Naive thymus-derived CD4-positive, alpha-beta T cell (primary cell): ENCODE measurements at regions of chr19 and their contacts with region 1.

Region 1: DNA sequence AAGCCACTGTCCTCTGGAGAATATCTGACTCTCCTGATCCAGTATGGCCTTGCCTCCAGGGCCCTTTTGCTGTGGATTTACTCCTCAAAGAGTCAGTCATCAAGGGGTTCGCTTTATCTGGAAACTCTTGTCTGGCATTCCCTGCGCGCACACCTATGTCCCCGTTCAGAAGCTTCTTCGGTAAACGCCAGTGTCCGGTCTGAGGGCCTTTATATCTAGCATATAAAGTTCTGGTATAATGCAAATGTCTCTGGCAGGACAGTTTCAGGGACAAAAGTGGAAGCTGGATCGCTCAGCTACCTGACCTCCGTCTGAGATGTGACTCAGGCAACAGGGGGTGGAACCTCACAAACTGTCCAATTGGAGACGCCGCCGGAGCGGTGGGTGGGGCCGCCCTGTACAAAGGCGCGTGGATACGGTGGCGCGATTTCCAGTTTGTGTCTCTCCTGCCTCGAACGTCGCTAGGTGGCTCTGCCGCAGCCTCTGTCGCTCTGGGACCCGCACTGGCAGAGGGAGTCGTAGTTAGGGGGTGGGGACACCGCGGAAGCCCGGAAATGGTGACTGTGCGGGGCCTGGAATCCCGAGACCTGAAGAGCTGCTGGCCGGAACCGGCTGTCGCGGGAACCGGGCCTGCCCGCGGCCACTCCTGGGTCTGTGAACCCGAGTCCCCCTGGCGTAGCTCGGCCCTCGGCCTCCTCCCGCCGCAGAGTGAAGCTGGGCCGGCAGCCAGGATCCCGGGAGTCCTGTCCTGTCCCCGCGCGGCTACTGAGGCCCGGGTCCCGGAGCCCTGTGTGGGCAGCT is 10.6 kb upstream of the ZNF709 start:
- DNase-seq: peak; percentile 76 to 94 (median 91)
- ATAC-seq: peak; percentile 100
- H3K4me3 ChIP-seq: peak overlapping the region; percentile 80
- H3K4me3 Mint-ChIP-seq: peak overlapping the region; percentile 84 to 95 (median 91)
- H3K27ac ChIP-seq: peak overlapping the region; percentile 72
- H3K27ac Mint-ChIP-seq: peak overlapping the region; percentile 84 to 98 (median 91)
- H3K4me1 ChIP-seq: peaks cover 9 to 11% of the 10 kb centered on the region in 2 donors
- H3K4me1 Mint-ChIP-seq: peaks cover 0 to 16% (median 13%) of the 10 kb centered on the region in 7 donors
- H3K27me3 ChIP-seq: no peaks in the 10 kb centered on the region
- H3K27me3 Mint-ChIP-seq: no peaks in the 10 kb centered on the region

Region 2: DNA sequence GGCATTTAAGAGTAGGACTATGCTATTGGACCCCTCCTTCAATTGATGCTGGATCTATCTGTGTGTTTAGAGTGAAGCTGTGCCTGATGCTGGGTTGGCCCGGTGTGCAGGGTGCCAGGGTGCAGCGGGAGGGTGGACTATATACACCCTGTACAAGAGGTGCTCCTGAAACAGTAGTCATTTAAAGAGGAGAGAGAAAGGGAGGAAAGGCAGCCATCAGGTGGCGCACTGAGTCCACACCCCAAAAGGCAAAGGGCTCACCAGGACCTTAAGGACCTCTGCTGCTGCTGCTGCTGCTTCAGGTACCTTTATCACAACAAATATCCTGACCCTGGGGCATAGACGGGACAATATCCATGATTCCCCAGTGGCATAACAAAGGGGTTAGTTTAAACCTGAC is 293.0 kb before region 1 on chr19:
- CTCF ChIA-PET with region 1: no interaction called
- POLR2A ChIA-PET with region 1: no interaction called
- intact Hi-C with region 1: loop called in 1 of 2 experiments (anchors 2 kb)
- DNase-seq: peak in 8 of 9 donors; percentile 20 to 68 (median 46)
- ATAC-seq: peak; percentile 82
- H3K4me3 ChIP-seq: no peak overlapping the region
- H3K4me3 Mint-ChIP-seq: peak overlapping the region in 4 of 10 donors; percentile 3 to 54 (median 25)
- H3K27ac ChIP-seq: no peak overlapping the region
- H3K27ac Mint-ChIP-seq: peak overlapping the region in 6 of 9 donors; percentile 26 to 81 (median 61)
- H3K4me1 ChIP-seq: no peaks in the 10 kb centered on the region
- H3K4me1 Mint-ChIP-seq: peaks cover 6 to 53% (median 22%) of the 10 kb centered on the region in 7 donors
- H3K27me3 ChIP-seq: no peaks in the 10 kb centered on the region
- H3K27me3 Mint-ChIP-seq: no peaks in the 10 kb centered on the region

Region 3: GRCh38 chr19:12333162-12334159 is 161.7 kb before region 1 on chr19 and contains the start of gene ZNF563:
- CTCF ChIA-PET with region 1: no interaction called
- POLR2A ChIA-PET with region 1: interaction called, 12 read pairs
- intact Hi-C with region 1: loop called (anchors 1 to 10 kb)
- DNase-seq: peak; percentile 91 to 99 (median 98)
- ATAC-seq: peak; percentile 99
- H3K4me3 ChIP-seq: peak within 1 kb of the TSS; percentile 61
- H3K4me3 Mint-ChIP-seq: peak within 1 kb of the TSS; percentile 90 to 100 (median 96)
- H3K27ac ChIP-seq: peak within 1 kb of the TSS; percentile 92
- H3K27ac Mint-ChIP-seq: peak within 1 kb of the TSS; percentile 92 to 99 (median 97)
- H3K4me1 ChIP-seq: peaks cover 9 to 22% of the 10 kb centered on the region in 2 donors
- H3K4me1 Mint-ChIP-seq: peaks cover 23 to 49% (median 40%) of the 10 kb centered on the region in 7 donors
- H3K27me3 ChIP-seq: no peaks in the 10 kb centered on the region
- H3K27me3 Mint-ChIP-seq: no peaks in the 10 kb centered on the region
- total RNA-seq, gene ZNF563: 2.8 to 23.2 (median 6.1) TPM

Region 4: GRCh38 chr19:12400633-12401502 is 94.3 kb before region 1 on chr19 and contains the start of gene ZNF799:
- CTCF ChIA-PET with region 1: no interaction called
- POLR2A ChIA-PET with region 1: interaction called, 3 read pairs
- intact Hi-C with region 1: loop called in 1 of 2 experiments (anchors 1 kb)
- DNase-seq: peak; percentile 55 to 79 (median 76)
- ATAC-seq: peak; percentile 96
- H3K4me3 ChIP-seq: peak within 1 kb of the TSS; percentile 91
- H3K4me3 Mint-ChIP-seq: peak within 1 kb of the TSS; percentile 88 to 96 (median 94)
- H3K27ac ChIP-seq: peak within 1 kb of the TSS; percentile 59
- H3K27ac Mint-ChIP-seq: peak within 1 kb of the TSS; percentile 75 to 93 (median 82)
- H3K4me1 ChIP-seq: no peaks in the 10 kb centered on the region
- H3K4me1 Mint-ChIP-seq: peaks cover 5 to 34% (median 20%) of the 10 kb centered on the region in 7 donors
- H3K27me3 ChIP-seq: no peaks in the 10 kb centered on the region
- H3K27me3 Mint-ChIP-seq: no peaks in the 10 kb centered on the region
- total RNA-seq, gene ZNF799: 1.7 to 9.9 (median 4.4) TPM

Region 5: DNA sequence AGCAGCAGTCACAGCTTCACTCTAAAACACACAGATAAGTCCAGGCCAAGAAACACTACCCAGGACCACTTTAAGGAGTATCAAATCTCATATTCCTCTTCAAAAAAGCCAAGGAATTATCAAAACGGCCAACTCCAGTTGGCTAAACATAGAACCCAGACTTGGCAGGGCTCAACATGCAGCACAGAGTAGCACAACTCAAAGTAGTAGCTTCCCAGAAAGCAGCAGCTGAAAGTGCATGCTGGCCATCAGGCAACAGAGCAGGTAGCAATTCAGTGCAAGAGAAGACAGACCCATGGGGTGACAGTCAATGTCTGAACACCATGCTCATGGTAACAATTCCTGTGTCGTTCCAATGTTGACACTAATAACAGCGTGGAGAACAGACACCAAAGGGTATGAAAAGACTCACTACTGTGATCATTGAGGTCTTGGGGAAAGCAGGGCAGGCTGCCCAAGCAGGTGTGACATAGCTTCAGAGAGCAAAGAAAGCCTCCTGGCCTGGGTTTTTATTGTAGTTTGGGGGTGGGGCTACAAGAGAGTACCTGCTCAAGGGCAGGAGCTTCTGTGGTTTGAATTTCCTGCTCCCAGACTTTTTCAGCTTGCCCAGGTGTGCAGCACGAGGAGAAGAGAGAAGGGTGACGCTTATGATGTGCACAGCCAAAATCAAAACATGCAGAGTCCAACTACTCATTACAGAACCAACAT is 16.8 kb before region 1 on chr19:
- CTCF ChIA-PET with region 1: no interaction called
- POLR2A ChIA-PET with region 1: interaction called, 30 read pairs
- intact Hi-C with region 1: no loop called
- DNase-seq: peak in 7 of 9 donors; percentile 22 to 40 (median 35)
- ATAC-seq: peak; percentile 31
- H3K4me3 ChIP-seq: no peak overlapping the region
- H3K4me3 Mint-ChIP-seq: peak overlapping the region in 8 of 10 donors; percentile 3 to 60 (median 36)
- H3K27ac ChIP-seq: peak overlapping the region; percentile 45
- H3K27ac Mint-ChIP-seq: peak overlapping the region in 8 of 9 donors; percentile 67 to 90 (median 79)
- H3K4me1 ChIP-seq: peaks cover 9 to 27% of the 10 kb centered on the region in 2 donors
- H3K4me1 Mint-ChIP-seq: peaks cover 17 to 59% (median 37%) of the 10 kb centered on the region in 7 donors
- H3K27me3 ChIP-seq: no peaks in the 10 kb centered on the region
- H3K27me3 Mint-ChIP-seq: no peaks in the 10 kb centered on the region

Region 6: GRCh38 chr19:12564016-12564664 is 68.9 kb after region 1 on chr19:
- CTCF ChIA-PET with region 1: interaction called, 4 read pairs
- POLR2A ChIA-PET with region 1: no interaction called
- intact Hi-C with region 1: loop called in 1 of 2 experiments (anchors 1 kb)
- DNase-seq: peak; percentile 79 to 96 (median 88)
- ATAC-seq: peak; percentile 100
- H3K4me3 ChIP-seq: no peak overlapping the region
- H3K4me3 Mint-ChIP-seq: peak overlapping the region in 1 of 10 donors; percentile 33
- H3K27ac ChIP-seq: no peak overlapping the region
- H3K27ac Mint-ChIP-seq: peak overlapping the region in 2 of 9 donors; percentile 3 to 51
- H3K4me1 ChIP-seq: no peaks in the 10 kb centered on the region
- H3K4me1 Mint-ChIP-seq: peaks cover 0 to 6% (median 5%) of the 10 kb centered on the region in 7 donors
- H3K27me3 ChIP-seq: no peaks in the 10 kb centered on the region
- H3K27me3 Mint-ChIP-seq: no peaks in the 10 kb centered on the region

Region 7: DNA sequence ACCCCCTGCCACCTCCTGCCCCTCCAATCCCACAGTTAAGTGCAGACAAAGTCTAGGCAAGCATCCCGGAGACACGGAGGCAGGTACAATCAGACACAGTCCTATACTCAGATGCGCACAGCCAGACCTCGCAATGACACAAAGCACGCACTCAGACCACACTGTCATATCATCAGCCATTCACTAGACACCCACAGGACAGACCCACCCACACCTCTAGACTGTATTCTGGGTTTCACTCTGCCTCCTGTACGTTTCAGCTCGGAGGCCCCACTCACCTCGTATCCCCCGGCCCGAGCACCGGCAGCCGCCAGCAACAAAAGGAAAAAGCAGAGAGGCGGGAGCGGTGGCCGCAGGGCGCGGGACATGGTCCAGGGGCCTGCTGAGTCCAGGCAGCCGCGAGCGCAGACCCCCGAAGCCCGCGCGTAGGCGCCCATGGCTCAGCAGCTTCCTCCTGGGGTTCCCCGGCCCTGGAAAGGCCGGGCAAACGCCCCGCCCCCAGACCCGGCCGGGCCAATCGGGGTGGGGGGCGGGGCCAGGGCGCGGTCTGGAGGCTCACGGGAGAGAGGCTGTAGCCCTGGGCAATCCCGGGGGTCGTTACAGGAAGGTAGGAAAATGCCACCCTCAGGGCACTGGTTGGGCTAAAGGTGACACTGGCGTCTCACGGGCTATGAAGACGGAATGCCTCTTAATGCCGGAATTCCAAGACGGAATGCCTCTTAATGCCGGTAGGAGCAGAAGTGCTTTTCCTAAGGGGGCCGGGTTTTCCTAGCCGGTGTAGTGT is 171.3 kb after region 1 on chr19 and contains the starts of genes MAN2B1 and WDR83:
- CTCF ChIA-PET with region 1: interaction called, 3 read pairs
- POLR2A ChIA-PET with region 1: no interaction called
- intact Hi-C with region 1: loop called in 1 of 2 experiments (anchors 1 kb)
- DNase-seq: peak; percentile 56 to 86 (median 72)
- ATAC-seq: peak; percentile 82
- H3K4me3 ChIP-seq: peak within 1 kb of the TSS; percentile 92
- H3K4me3 Mint-ChIP-seq: peak within 1 kb of the TSS; percentile 90 to 100 (median 98)
- H3K27ac ChIP-seq: peak within 1 kb of the TSS; percentile 99
- H3K27ac Mint-ChIP-seq: peak within 1 kb of the TSS; percentile 77 to 100 (median 91)
- H3K4me1 ChIP-seq: peaks cover 38% of the 10 kb centered on the region in 2 donors
- H3K4me1 Mint-ChIP-seq: peaks cover 22 to 69% (median 45%) of the 10 kb centered on the region in 7 donors
- H3K27me3 ChIP-seq: no peaks in the 10 kb centered on the region
- H3K27me3 Mint-ChIP-seq: no peaks in the 10 kb centered on the region
- total RNA-seq, gene MAN2B1: 105 to 215 (median 138) TPM
- total RNA-seq, gene WDR83: 7.8 to 18.6 (median 14.7) TPM